AG04450 (cell line): ENCODE measurements at regions of chr20 and their contacts with region 1.

Region 1: DNA sequence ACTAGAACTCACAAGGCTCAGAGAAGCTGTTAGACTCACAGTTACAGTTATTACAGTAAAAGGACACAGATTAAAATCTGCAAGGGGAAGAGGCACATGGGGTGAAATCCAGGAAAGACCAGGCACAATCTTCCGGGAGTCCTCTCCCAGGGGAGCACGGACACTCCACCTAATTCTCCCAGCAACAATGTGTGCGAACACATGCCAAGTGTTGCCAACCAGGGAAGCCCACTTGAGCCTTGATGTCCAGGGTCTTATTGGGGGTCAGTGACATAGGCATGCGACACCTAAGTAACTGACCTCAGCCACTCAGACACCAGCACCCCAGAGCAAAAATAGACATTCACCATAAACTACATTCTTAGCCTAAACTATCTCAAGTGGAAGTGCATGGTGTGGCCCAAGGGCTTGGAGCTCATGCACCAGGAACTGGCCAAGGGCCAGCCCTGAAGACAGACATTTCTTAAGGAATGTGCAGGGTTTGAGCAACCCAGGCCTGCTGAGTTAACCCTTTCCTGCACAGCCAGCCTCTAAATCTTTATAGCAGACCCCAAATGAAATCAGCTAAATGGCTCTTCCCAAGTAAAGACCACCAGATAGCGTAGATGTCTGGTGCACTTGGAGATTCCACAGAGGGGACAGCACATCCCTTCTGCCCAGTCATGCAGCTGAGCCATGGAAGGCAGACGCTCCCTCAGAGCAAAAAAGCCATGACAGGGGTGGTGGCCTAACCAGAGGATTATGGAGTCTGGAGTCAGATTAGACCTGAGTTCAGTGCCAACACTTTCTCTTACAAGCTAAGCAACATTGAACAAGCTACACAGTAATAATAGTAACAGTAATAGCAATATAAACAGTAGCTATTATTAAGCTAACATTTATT is 222.7 kb downstream of the ZMYND8 start:
- DNase-seq: no peak
- H3K4me3 ChIP-seq: no peak overlapping the region
- H3K27ac ChIP-seq: no peak overlapping the region
- H3K27me3 ChIP-seq: no peaks in the 10 kb centered on the region
- CTCF ChIP-seq: no peak

Region 2: DNA sequence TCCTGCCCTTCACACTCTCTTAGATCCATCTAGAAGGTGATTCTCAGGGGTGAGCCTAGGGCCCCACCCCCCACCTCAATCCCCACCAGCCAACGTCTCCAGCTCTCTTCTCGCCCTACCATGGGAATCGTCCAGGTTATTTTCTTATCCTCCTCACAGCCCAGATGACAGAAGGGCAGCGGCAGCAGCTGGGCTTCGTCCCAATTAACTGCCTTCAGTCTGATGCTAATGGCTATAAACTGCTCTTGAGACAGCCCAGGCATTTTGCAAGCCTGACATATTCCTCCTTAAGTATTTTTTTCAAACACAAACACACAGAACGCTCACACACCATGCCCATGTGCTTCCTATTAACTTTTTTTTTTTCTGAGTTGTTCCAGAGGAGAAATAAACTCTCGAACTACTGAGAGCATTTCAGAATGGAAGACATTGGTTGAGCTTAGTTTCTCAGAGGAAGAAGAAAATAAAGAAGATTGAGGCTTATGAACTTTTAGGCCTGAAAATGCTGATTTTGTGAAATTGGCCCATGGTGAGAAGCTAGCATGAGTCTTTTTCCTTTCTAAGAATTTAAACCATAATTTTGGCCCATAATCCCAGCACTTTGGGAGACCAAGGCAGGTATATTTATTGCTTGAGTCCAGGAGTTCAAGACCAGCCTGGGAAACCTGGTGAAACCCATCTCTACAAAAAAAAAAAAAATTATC is 114.5 kb before region 1 on chr20:
- CTCF ChIA-PET with region 1: no interaction called
- POLR2A ChIA-PET with region 1: no interaction called
- DNase-seq: peak; percentile 88
- H3K4me3 ChIP-seq: no peak overlapping the region
- H3K27ac ChIP-seq: peak overlapping the region; percentile 47
- H3K27me3 ChIP-seq: no peaks in the 10 kb centered on the region
- CTCF ChIP-seq: no peak

Region 3: DNA sequence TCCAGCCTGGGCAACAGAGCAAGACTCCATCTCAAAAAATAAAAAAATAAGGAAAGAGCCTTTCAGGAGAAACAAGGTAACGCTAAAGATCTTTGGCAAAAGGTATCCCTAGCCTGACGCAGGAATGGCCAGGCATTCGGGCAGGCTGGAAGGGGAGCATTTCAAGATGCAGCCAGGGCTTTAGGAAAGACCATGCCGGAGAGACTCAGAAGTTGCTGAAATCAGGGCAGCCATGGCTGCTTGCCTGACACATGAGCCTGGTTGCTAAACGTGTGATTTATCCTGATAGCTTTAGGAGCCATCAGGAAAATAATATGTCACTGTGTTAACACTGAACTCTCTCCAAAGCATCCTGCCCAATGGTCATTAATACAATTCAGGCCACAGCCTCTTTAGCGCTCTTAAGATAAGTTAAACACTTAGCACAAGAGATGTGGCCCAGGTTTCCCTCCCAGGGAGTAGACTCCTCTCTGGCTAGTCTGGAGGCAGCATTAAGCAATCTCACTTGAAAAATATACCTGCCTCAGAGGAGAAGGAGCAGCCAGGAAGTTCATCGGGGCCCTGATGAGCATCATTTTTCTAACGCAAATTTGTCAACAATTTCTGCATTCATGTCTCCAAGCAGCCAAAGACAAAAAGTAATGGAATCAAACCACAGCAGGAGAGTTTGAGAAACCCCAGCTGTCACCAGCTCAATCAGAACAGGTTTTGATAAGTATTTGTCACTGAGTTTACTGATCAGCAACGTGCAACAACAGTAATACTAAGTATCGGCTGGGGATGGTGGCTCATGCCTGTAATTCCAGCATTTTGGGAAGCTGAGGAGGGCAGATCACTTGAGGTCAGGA is 22.7 kb after region 1 on chr20:
- CTCF ChIA-PET with region 1: no interaction called
- POLR2A ChIA-PET with region 1: no interaction called
- DNase-seq: no peak
- H3K4me3 ChIP-seq: no peak overlapping the region
- H3K27ac ChIP-seq: no peak overlapping the region
- H3K27me3 ChIP-seq: no peaks in the 10 kb centered on the region
- CTCF ChIP-seq: no peak

Region 4: GRCh38 chr20:47231382-47232039 is 97.7 kb after region 1 on chr20:
- CTCF ChIA-PET with region 1: no interaction called
- POLR2A ChIA-PET with region 1: interaction called, 12 read pairs
- DNase-seq: peak; percentile 79
- H3K4me3 ChIP-seq: no peak overlapping the region
- H3K27ac ChIP-seq: peak overlapping the region; percentile 95
- H3K27me3 ChIP-seq: no peaks in the 10 kb centered on the region
- CTCF ChIP-seq: peak; percentile 56

Region 5: DNA sequence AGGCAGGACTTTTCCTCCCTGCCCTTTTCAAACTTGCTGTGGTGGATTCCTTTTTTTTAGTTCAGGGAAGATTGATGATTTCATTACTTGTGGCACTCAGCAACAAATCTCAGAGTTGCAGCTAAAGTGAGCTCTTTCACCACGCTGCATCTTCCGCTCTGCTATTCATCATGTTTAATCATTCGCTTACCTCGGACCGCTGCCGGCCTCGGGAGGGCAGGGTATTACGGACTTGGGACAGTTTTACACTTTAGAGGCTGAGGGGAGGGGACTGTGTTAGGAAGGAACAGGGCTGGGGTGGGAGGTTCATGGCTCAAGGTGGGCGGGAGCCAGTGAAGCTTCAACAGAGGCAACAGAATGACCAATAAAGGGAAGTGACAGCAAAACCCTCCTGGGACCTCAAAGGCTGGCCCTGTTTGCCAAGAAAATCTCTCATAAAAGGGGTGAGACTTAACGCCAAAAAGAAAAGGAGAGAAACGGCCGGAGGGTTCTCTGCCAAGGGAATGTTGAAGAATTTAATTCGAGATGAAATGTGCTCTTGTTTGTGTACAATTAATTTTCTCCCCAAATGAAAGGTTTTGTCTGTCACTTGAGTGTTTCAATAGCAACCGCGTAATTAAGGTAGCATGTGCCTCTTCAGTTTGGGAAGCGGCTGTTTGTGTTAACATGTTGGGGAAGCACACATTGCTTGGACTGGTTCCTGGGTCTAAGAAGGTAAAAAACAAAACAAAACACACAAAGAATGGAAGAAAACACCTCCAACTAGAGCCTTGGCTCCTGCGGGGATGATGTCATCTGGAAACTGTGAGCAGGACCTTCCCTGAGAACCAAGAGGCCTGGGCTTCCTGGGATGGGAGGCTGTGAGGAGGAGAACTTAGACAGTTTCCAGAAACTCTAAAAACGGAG is 724.0 kb after region 1 on chr20:
- CTCF ChIA-PET with region 1: no interaction called
- POLR2A ChIA-PET with region 1: no interaction called
- DNase-seq: no peak
- H3K4me3 ChIP-seq: no peak overlapping the region
- H3K27ac ChIP-seq: no peak overlapping the region
- H3K27me3 ChIP-seq: peaks cover 2% of the 10 kb centered on the region
- CTCF ChIP-seq: no peak